Activated T-helper 1 cell treated with anti-CD3 and anti-CD28 coated beads, Interleukin-12 subunit alpha, Interleukin-12 subunit beta, Interleukin-2, Interleukin-4 antibody, amounts not matched to agents 30 ng/mL and 10 ng/mL and 1 ng/mL, durations not matched to agents 14 hours and 24 hours and 36 hours (primary cell): ENCODE measurements at regions of chr17 and their contacts with region 1.

Region 1: GRCh38 chr17:19377602-19378392 is 501 bp upstream of the MAPK7 start:
- DNase-seq: peak; percentile 98
- H3K4me3 Mint-ChIP-seq: peak overlapping the region; percentile 98
- H3K27ac Mint-ChIP-seq: peak overlapping the region; percentile 99
- H3K4me1 Mint-ChIP-seq: peaks cover 36% of the 10 kb centered on the region
- H3K27me3 Mint-ChIP-seq: no peaks in the 10 kb centered on the region

Region 2: DNA sequence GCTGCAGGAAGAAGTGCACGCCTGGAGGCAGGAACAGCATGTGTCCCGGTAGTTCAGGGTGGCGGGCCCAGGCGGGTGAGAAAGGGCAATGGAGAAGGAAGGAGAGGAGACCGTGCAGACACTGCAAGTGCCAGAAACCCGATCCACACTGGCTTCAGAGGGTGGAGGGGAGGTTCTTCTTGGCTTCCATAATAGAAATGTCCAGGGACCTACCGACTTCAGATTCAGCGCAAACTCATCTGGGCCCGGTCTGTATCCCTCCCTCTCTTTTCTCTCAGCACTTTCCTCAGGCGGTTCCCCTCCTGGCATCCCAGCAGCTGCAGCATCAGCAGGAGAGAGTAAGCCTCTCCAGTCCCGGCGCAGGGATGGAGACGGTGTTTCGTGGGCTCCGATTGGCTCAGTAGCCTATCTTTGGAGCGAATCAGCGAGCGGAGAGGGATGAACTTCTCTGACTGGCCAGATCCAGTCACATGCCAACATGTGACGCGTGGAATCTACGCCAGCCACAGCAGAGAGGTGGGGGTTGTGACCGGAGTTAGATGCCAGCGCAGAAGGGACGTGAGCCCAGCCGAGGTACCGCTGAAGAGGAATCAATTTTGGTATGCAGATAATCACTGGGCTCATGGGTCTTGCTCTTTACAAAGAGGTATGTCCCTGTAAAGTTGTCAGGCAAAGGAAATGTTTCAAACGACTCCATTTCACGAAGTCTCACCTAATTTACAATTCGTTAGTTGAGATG is 521.8 kb before region 1 on chr17:
- intact Hi-C with region 1: loop called (anchors 5 kb)
- DNase-seq: peak; percentile 86
- H3K4me3 Mint-ChIP-seq: peak overlapping the region; percentile 87
- H3K27ac Mint-ChIP-seq: peak overlapping the region; percentile 80
- H3K4me1 Mint-ChIP-seq: peaks cover 43% of the 10 kb centered on the region
- H3K27me3 Mint-ChIP-seq: peaks cover 3% of the 10 kb centered on the region

Region 3: DNA sequence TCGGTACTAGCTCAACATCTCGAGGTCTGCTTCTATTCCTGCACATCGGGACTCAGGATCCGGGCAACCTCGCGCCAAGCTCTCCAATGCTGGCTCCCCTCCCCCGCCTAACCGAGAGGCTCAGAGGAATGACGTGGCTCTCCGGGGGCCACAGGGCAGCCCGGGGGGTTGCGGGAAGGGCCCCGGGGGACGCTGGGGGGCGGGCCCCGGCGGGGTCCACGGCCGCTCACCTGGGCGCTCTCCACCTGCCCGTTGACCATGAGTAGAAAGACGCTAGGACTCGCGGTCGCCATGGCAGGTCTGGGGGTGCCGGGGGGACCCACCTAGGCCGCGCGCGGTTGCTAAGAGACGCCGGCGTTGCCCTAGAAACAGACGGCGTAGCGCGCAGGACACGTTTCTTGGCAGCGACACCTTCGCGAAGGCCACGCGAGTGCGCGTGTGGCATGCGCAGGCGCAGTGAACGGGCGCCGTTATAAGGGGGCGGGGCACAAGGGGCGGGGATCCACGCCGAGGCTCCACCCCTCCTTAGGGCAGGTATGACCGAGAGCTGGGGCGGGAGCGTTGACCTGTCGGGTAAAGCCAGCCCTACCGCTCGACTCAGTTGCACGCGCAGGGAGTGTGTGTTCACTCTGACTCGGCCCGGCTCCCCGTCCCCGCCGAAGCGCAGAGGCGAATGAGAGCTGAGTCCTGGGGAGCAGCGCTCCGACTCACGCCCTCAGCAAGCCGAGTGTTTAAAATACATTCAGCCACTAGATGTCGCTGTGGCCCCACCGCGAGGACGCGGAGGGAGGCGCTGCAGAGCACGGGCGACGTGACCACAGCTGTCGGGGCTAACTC is 15.3 kb before region 1 on chr17 and contains the start of gene B9D1:
- intact Hi-C with region 1: loop called (anchors 1 kb)
- DNase-seq: peak; percentile 85
- H3K4me3 Mint-ChIP-seq: peak within 1 kb of the TSS; percentile 87
- H3K27ac Mint-ChIP-seq: peak within 1 kb of the TSS; percentile 67
- H3K4me1 Mint-ChIP-seq: peaks cover 7% of the 10 kb centered on the region
- H3K27me3 Mint-ChIP-seq: peaks cover 16% of the 10 kb centered on the region
- total RNA-seq, gene B9D1: 4.3 and 5.6 TPM in 2 replicates

Region 4: GRCh38 chr17:19447085-19447583 is 69.3 kb after region 1 on chr17:
- intact Hi-C with region 1: loop called (anchors 1 kb)
- DNase-seq: peak; percentile 50
- H3K4me3 Mint-ChIP-seq: no peak overlapping the region
- H3K27ac Mint-ChIP-seq: no peak overlapping the region
- H3K4me1 Mint-ChIP-seq: peaks cover 5% of the 10 kb centered on the region
- H3K27me3 Mint-ChIP-seq: peaks cover 23% of the 10 kb centered on the region

Region 5: GRCh38 chr17:19507775-19508576 is 130.2 kb after region 1 on chr17:
- intact Hi-C with region 1: loop called (anchors 5 kb)
- DNase-seq: peak; percentile 72
- H3K4me3 Mint-ChIP-seq: peak overlapping the region; percentile 94
- H3K27ac Mint-ChIP-seq: peak overlapping the region; percentile 98
- H3K4me1 Mint-ChIP-seq: peaks cover 11% of the 10 kb centered on the region
- H3K27me3 Mint-ChIP-seq: peaks cover 18% of the 10 kb centered on the region

Region 6: GRCh38 chr17:19766422-19767270 is 388.8 kb after region 1 on chr17:
- intact Hi-C with region 1: loop called (anchors 5 kb)
- DNase-seq: peak; percentile 67
- H3K4me3 Mint-ChIP-seq: no peak overlapping the region
- H3K27ac Mint-ChIP-seq: peak overlapping the region; percentile 2
- H3K4me1 Mint-ChIP-seq: peaks cover 40% of the 10 kb centered on the region
- H3K27me3 Mint-ChIP-seq: peaks cover 2% of the 10 kb centered on the region